Naive thymus-derived CD4-positive, alpha-beta T cell (primary cell): ENCODE measurements at regions of chr14 and their contacts with region 1.

Region 1: GRCh38 chr14:55270832-55271565 is at the start of gene FBXO34:
- DNase-seq: peak; percentile 96 to 100 (median 99)
- ATAC-seq: peak; percentile 96
- H3K4me3 ChIP-seq: peak within 1 kb of the TSS; percentile 64
- H3K4me3 Mint-ChIP-seq: peak within 1 kb of the TSS; percentile 85 to 94 (median 92)
- H3K27ac ChIP-seq: peak within 1 kb of the TSS; percentile 88
- H3K27ac Mint-ChIP-seq: peak within 1 kb of the TSS; percentile 85 to 96 (median 94)
- H3K4me1 ChIP-seq: peaks cover 4 to 19% of the 10 kb centered on the region in 2 donors
- H3K4me1 Mint-ChIP-seq: peaks cover 19 to 48% (median 40%) of the 10 kb centered on the region in 7 donors
- H3K27me3 ChIP-seq: no peaks in the 10 kb centered on the region
- H3K27me3 Mint-ChIP-seq: peaks cover 0 to 3% (median 0%) of the 10 kb centered on the region in 5 donors
- total RNA-seq, gene FBXO34: 22.0 to 27.3 (median 25.8) TPM

Region 2: GRCh38 chr14:54440873-54441868 is 829.8 kb before region 1 on chr14 and contains the start of gene CNIH1:
- CTCF ChIA-PET with region 1: no interaction called
- POLR2A ChIA-PET with region 1: no interaction called
- intact Hi-C with region 1: loop called in 1 of 2 experiments (anchors 1 kb)
- DNase-seq: peak; percentile 85 to 99 (median 93)
- ATAC-seq: peak; percentile 97
- H3K4me3 ChIP-seq: peak within 1 kb of the TSS; percentile 73
- H3K4me3 Mint-ChIP-seq: peak within 1 kb of the TSS; percentile 85 to 97 (median 94)
- H3K27ac ChIP-seq: peak within 1 kb of the TSS; percentile 80
- H3K27ac Mint-ChIP-seq: peak within 1 kb of the TSS; percentile 87 to 98 (median 95)
- H3K4me1 ChIP-seq: peaks cover 9 to 23% of the 10 kb centered on the region in 2 donors
- H3K4me1 Mint-ChIP-seq: peaks cover 23 to 54% (median 49%) of the 10 kb centered on the region in 7 donors
- H3K27me3 ChIP-seq: no peaks in the 10 kb centered on the region
- H3K27me3 Mint-ChIP-seq: peaks cover 0 to 2% (median 0%) of the 10 kb centered on the region in 5 donors
- total RNA-seq, gene CNIH1: 50.5 to 87.9 (median 57.8) TPM

Region 3: GRCh38 chr14:55212634-55213033 is 58.4 kb before region 1 on chr14:
- CTCF ChIA-PET with region 1: interaction called, 4 read pairs
- POLR2A ChIA-PET with region 1: no interaction called
- intact Hi-C with region 1: loop called (anchors 1 kb)
- DNase-seq: no peak
- ATAC-seq: no peak
- H3K4me3 ChIP-seq: no peak overlapping the region
- H3K4me3 Mint-ChIP-seq: no peak overlapping the region
- H3K27ac ChIP-seq: no peak overlapping the region
- H3K27ac Mint-ChIP-seq: no peak overlapping the region
- H3K4me1 ChIP-seq: no peaks in the 10 kb centered on the region
- H3K4me1 Mint-ChIP-seq: peaks cover 0 to 5% (median 5%) of the 10 kb centered on the region in 7 donors
- H3K27me3 ChIP-seq: no peaks in the 10 kb centered on the region
- H3K27me3 Mint-ChIP-seq: peaks cover 0 to 11% (median 0%) of the 10 kb centered on the region in 5 donors

Region 4: GRCh38 chr14:55288439-55288838 is 17.4 kb after region 1 on chr14:
- CTCF ChIA-PET with region 1: no interaction called
- POLR2A ChIA-PET with region 1: no interaction called
- intact Hi-C with region 1: no loop called
- DNase-seq: no peak
- ATAC-seq: no peak
- H3K4me3 ChIP-seq: no peak overlapping the region
- H3K4me3 Mint-ChIP-seq: no peak overlapping the region
- H3K27ac ChIP-seq: no peak overlapping the region
- H3K27ac Mint-ChIP-seq: no peak overlapping the region
- H3K4me1 ChIP-seq: peaks cover 0 to 1% of the 10 kb centered on the region in 2 donors
- H3K4me1 Mint-ChIP-seq: peaks cover 18 to 60% (median 50%) of the 10 kb centered on the region in 7 donors
- H3K27me3 ChIP-seq: no peaks in the 10 kb centered on the region
- H3K27me3 Mint-ChIP-seq: no peaks in the 10 kb centered on the region

Region 5: DNA sequence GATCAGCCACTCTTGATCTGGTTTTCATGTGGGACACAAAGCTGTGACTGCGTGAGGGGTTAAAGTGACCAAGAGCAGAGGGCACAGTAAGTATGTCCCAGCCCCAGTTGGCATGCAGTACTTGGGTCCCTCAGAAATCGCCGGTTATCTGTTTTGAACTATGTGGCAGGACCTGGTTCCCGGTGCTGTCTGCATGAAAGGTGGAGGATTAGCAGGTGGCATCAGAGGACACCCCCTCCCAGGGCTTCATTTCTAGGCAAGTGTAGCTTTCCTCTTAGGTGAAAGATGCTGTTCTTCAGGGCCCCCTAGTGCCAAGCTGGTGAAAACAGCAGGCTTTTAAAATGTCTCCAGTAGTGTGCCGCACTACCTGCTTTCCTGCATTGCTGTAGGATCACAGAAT is 83.5 kb after region 1 on chr14:
- CTCF ChIA-PET with region 1: interaction called, 77 read pairs
- POLR2A ChIA-PET with region 1: interaction called, 28 read pairs
- intact Hi-C with region 1: loop called (anchors 1 kb)
- DNase-seq: peak; percentile 25 to 79 (median 73)
- ATAC-seq: peak; percentile 95
- H3K4me3 ChIP-seq: peak overlapping the region; percentile 12
- H3K4me3 Mint-ChIP-seq: peak overlapping the region in 9 of 10 donors; percentile 48 to 85 (median 72)
- H3K27ac ChIP-seq: peak overlapping the region; percentile 66
- H3K27ac Mint-ChIP-seq: peak overlapping the region; percentile 72 to 96 (median 95)
- H3K4me1 ChIP-seq: peaks cover 0 to 9% of the 10 kb centered on the region in 2 donors
- H3K4me1 Mint-ChIP-seq: peaks cover 6 to 29% (median 21%) of the 10 kb centered on the region in 7 donors
- H3K27me3 ChIP-seq: no peaks in the 10 kb centered on the region
- H3K27me3 Mint-ChIP-seq: no peaks in the 10 kb centered on the region

Region 6: DNA sequence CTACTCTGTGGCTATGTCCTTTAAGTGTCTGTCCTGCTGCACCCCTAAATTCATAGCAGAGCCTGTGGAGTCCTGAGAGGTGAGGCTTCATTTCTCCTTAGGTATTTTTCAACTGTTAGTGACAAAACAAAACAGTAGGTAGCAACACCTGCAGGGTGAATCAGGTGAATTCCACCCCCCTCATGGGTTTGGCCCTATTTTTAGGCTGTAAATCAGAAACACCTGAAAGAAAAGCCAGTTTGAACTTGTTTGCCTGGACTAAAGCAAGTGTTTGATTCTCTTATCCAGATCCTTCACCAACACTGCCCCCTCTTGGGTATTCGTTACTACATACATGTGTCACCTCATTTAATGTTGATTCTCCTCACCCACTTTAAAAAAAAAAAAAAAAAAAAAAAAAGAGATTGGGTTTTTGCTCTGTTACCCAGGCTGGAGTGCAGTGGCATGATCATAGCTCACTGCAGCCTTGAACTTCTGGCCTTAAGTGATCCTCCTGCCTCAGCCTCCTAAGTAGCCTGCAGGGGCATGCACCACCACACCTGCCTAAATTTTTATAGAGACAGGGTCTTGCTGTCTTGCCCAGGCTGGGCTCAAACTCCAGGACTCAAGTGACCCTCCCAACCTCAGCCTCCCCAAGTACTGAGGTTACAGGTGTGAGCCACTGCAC is 159.2 kb after region 1 on chr14:
- CTCF ChIA-PET with region 1: interaction called, 9 read pairs
- POLR2A ChIA-PET with region 1: no interaction called
- intact Hi-C with region 1: loop called (anchors 1 kb)
- DNase-seq: peak in 7 of 9 donors; percentile 65 to 83 (median 77)
- ATAC-seq: peak; percentile 94
- H3K4me3 ChIP-seq: no peak overlapping the region
- H3K4me3 Mint-ChIP-seq: no peak overlapping the region
- H3K27ac ChIP-seq: peak overlapping the region; percentile 10
- H3K27ac Mint-ChIP-seq: peak overlapping the region in 8 of 9 donors; percentile 2 to 93 (median 70)
- H3K4me1 ChIP-seq: peaks cover 15 to 32% of the 10 kb centered on the region in 2 donors
- H3K4me1 Mint-ChIP-seq: peaks cover 18 to 48% (median 39%) of the 10 kb centered on the region in 7 donors
- H3K27me3 ChIP-seq: no peaks in the 10 kb centered on the region
- H3K27me3 Mint-ChIP-seq: no peaks in the 10 kb centered on the region

Region 7: DNA sequence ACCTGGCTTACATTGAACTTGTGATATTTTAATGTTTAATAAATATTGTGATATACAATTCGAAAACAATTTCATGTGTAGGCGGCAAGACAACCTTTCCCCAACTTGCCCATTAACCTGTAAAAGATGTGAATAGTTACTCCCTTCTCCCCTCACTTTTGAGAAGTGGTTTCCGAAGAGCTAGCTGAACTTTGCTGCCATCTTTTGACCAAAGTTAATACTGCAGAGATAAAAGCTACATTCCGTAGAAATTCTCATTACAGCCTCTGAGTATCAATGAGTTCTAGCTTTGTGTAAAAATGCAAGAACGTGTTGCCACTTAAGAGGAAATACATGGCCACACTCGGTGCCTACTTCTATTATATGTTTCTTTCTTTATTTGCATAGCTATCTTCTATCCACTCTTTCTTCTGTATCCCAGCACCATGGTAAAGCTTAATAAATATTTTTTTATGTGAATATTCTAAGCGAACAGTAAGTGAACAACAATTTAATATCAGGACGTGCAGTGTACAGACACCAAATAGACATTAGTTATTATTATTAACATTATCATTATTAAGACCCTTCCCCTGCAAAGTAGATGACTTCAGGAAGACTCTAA is 1203.5 kb after region 1 on chr14:
- CTCF ChIA-PET with region 1: no interaction called
- POLR2A ChIA-PET with region 1: no interaction called
- intact Hi-C with region 1: loop called in 1 of 2 experiments (anchors 1 kb)
- DNase-seq: peak in 5 of 9 donors; percentile 32 to 51 (median 43)
- ATAC-seq: peak; percentile 63
- H3K4me3 ChIP-seq: no peak overlapping the region
- H3K4me3 Mint-ChIP-seq: no peak overlapping the region
- H3K27ac ChIP-seq: no peak overlapping the region
- H3K27ac Mint-ChIP-seq: no peak overlapping the region
- H3K4me1 ChIP-seq: no peaks in the 10 kb centered on the region
- H3K4me1 Mint-ChIP-seq: no peaks in the 10 kb centered on the region
- H3K27me3 ChIP-seq: no peaks in the 10 kb centered on the region
- H3K27me3 Mint-ChIP-seq: peaks cover 0 to 23% (median 12%) of the 10 kb centered on the region in 5 donors